Left lung (tissue), 14 donors: ENCODE measurements at regions of chr9 and their contacts with region 1.

Region 1: DNA sequence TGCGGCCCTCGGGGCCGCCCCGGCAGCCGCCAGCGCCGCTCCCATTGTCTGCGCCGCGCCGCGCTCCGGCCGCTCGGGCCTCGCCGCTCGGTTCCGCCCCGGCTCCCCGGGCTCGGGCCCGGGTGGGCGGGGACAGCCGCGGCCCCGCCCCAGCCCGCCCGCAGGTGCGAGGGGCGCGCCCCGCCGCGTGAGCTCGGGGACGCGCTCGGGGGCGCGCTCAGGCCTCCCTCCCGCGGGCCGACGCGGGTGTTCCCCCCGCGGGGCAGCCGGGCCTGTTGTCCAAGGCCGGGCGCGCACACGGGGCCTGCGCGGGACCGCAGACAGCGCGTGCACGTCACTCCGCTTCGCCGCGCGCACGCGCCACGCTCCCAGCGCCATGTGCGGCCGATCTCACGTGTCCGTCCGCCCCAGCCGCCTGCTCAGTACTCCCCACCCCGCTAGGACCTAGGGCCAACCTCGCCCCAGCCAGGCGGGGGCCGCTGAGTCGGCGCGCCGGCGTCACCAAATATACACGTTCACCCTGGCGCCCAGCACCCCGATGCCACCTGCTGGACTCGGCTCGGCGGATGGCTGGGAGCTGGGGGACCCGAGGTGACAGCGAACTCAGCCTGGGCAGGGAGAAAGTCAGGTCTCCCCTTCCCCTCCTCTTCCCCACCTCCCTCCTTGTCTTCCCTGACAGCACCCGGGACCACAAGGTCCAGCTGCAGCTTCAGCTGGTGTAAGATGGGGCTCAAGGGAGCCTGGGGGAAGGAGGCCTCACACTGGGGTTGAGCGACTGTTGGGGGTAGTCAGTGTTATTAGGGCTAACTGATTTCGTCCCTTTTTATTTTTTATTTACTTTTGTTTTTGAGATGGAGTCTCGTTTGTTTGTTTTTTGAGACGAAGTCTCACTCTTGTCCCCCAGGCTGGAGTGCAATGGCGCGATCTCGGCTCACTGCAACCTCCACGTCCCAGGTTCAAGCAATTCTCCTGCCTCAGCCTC is 14.3 kb downstream of the GBGT1 start:
- DNase-seq: peak; percentile 79 to 96 (median 90)
- ATAC-seq: peak; percentile 78
- H3K4me3 ChIP-seq: peak overlapping the region; percentile 24 to 65
- H3K27ac ChIP-seq: peak overlapping the region; percentile 81 to 83
- H3K4me1 ChIP-seq: peaks cover 16 to 32% of the 10 kb centered on the region in 2 donors
- H3K27me3 ChIP-seq: no peaks in the 10 kb centered on the region
- CTCF ChIP-seq: peak in 1 of 2 donors; percentile 17

Region 2: DNA sequence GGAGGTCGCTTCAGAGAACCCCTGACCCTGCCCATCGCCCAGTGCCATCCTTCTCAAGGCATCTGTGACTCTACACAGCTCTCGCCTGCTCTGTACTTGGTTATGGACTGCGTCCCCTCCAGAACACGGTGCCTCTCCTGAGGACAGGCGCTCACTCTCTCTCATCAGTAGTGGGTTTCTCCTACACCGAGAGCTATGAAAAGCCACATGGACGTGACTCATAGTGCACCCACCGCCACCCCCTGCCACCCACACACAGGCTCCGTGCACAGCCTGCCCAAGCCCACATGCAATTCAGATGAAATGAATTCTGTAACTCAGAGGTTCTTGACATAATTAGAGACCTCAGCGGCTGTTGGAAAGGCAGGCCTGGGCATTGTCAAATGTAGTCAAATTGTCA is 104.8 kb before region 1 on chr9:
- intact Hi-C with region 1: loop called in 1 of 2 experiments (anchors 5 kb)
- DNase-seq: no peak
- ATAC-seq: no peak
- H3K4me3 ChIP-seq: no peak overlapping the region
- H3K27ac ChIP-seq: no peak overlapping the region
- H3K4me1 ChIP-seq: no peaks in the 10 kb centered on the region
- H3K27me3 ChIP-seq: no peaks in the 10 kb centered on the region
- CTCF ChIP-seq: no peak

Region 3: GRCh38 chr9:133103183-133103986 is 46.0 kb before region 1 on chr9:
- intact Hi-C with region 1: loop called in 1 of 2 experiments (anchors 5 kb)
- DNase-seq: peak in 3 of 4 donors; percentile 55 to 93 (median 64)
- ATAC-seq: peak; percentile 87
- H3K4me3 ChIP-seq: no peak overlapping the region
- H3K27ac ChIP-seq: peak overlapping the region in 1 of 2 donors; percentile 18
- H3K4me1 ChIP-seq: peaks cover 0 to 8% of the 10 kb centered on the region in 2 donors
- H3K27me3 ChIP-seq: no peaks in the 10 kb centered on the region
- CTCF ChIP-seq: peak; percentile 94 to 96

Region 4: DNA sequence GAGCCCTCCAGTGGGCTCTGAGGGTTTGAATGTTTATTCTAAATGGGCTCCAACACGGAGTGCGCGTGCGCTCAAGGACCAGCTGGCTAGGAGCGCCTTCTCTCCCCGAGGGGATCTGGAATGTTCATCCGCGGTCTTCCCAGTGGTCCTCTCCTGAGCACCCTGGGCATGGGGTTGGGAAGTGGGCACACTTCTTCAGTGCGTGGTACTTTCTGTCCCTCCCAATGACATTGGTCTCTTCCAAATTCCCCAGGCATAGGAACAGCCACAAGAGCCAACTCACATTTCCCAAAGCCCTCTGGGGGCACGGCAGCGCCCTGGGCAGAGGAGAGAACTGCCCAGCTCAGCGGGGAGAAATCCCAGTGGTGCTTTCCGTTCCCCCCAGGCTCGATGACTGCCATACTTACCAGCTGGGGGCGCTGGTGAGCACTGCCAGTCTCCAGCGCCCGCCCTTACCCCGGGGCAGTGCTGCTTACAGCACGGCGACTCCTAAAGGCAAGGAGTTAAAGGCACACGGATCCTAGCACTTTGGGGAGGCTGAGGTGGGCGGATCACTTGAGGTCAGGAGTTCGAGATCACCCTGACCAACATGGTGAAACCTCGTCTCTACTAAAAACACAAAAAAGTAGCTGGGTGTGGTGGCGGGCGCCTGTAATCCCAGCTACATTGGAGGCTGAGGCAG is 89.6 kb after region 1 on chr9:
- intact Hi-C with region 1: no loop called
- DNase-seq: peak; percentile 56 to 89 (median 73)
- ATAC-seq: peak; percentile 94
- H3K4me3 ChIP-seq: peak overlapping the region; percentile 17 to 34
- H3K27ac ChIP-seq: peak overlapping the region; percentile 46 to 51
- H3K4me1 ChIP-seq: peaks cover 11 to 21% of the 10 kb centered on the region in 2 donors
- H3K27me3 ChIP-seq: peaks cover 0 to 7% of the 10 kb centered on the region in 2 donors
- CTCF ChIP-seq: peak; percentile 75 to 80